Activated CD4-positive, alpha-beta T cell treated with anti-CD3 and anti-CD28 coated beads for 36 hours (primary cell): ENCODE measurements at regions of chr1 and their contacts with region 1.

Region 1: DNA sequence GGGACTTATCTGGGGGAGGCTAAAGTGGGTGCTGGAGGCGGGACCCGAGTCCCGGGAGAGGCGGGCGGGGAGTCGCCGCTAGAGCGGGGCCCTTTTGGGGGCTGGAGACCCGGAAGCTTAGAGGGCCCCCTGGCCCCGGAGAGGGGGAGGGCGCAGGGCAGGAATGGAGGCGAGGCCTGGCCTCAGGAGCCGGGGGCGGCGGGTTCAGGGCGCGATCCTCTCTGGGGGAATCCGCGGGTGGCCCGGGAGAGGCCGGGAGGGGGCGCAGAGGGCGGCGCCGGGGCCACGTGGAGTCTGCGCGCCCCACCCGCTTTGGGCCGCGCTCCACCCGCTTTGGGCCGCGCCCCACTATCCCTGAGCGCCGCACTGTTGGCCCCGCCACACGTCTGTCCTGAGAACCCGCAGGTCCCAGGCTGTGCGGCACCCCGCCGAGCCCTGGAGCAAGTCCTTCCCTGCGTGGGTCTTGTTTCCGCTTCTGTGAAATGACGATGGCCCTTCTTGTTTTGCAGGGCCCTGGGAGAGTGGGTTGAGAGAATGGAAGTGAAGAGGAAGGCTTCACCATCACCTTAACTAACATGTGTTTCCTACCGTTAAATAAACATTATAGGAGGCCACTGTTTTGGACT is 84.4 kb downstream of the NKAIN1 start:
- DNase-seq: peak; percentile 79
- ATAC-seq: peak; percentile 82
- H3K4me3 Mint-ChIP-seq: peak overlapping the region; percentile 88
- H3K27ac Mint-ChIP-seq: peak overlapping the region; percentile 87
- H3K4me1 Mint-ChIP-seq: peaks cover 8% of the 10 kb centered on the region
- H3K27me3 Mint-ChIP-seq: no peaks in the 10 kb centered on the region

Region 2: GRCh38 chr1:31010086-31010989 is 145.0 kb before region 1 on chr1:
- CTCF ChIA-PET with region 1: no interaction called
- POLR2A ChIA-PET with region 1: no interaction called
- intact Hi-C with region 1: loop called in 1 of 2 experiments (anchors 1 kb)
- DNase-seq: peak; percentile 60
- ATAC-seq: peak; percentile 98
- H3K4me3 Mint-ChIP-seq: no peak overlapping the region
- H3K27ac Mint-ChIP-seq: peak overlapping the region; percentile 88
- H3K4me1 Mint-ChIP-seq: peaks cover 68% of the 10 kb centered on the region
- H3K27me3 Mint-ChIP-seq: no peaks in the 10 kb centered on the region

Region 3: DNA sequence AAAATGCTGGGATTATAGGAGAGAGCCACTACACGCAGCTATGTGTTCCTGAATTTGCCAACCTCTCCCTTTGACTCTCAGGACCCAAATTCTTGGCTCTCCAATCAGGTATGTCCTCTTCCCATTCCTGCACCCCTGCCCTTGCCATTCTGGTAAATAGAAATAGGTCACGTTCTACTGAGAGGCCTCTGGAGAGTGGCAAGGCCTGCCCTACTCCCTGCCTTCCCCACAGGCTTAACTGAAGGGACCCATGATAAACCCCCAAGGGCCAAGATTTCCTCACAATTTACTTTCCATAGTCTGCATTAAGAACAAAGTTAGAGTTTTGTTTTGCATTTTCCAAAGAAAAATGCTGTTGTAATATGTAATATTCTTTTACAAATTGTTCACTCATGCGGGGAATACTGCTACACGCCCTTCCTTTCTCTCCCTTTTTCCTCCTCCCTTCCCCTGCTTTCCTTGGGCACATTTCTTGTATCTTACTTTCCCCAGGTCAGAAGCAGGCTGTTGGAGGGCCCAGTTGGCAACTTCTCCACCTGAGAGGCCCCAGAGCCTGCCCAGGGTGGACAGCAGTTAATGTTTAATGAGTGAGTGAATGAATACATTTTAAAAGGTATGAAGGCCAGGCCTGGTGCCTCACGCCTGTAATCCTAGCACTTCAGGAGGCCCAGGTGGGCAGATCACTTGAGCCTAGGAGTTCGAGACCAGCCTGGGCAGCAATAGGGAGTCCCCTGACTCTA is 55.9 kb before region 1 on chr1:
- CTCF ChIA-PET with region 1: no interaction called
- POLR2A ChIA-PET with region 1: no interaction called
- intact Hi-C with region 1: no loop called
- DNase-seq: no peak
- ATAC-seq: no peak
- H3K4me3 Mint-ChIP-seq: no peak overlapping the region
- H3K27ac Mint-ChIP-seq: no peak overlapping the region
- H3K4me1 Mint-ChIP-seq: no peaks in the 10 kb centered on the region
- H3K27me3 Mint-ChIP-seq: no peaks in the 10 kb centered on the region

Region 4: DNA sequence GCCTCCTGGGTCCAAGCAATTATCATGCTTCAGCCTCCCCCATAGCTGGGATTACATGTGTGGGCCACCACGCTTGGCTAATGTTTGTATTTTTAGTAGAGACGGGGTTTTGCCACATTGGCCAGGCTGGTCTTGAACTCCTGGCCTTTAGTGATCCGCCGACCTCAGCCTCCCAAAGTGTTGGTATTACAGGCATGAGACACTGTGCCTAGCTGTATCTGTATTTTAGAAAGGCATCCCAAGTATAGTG is 15.1 kb after region 1 on chr1:
- CTCF ChIA-PET with region 1: interaction called, 8 read pairs
- POLR2A ChIA-PET with region 1: no interaction called
- intact Hi-C with region 1: loop called in 1 of 2 experiments (anchors 1 kb)
- DNase-seq: no peak
- ATAC-seq: no peak
- H3K4me3 Mint-ChIP-seq: no peak overlapping the region
- H3K27ac Mint-ChIP-seq: peak overlapping the region; percentile 53
- H3K4me1 Mint-ChIP-seq: peaks cover 9% of the 10 kb centered on the region
- H3K27me3 Mint-ChIP-seq: no peaks in the 10 kb centered on the region

Region 5: GRCh38 chr1:31296486-31297276 is 141.4 kb after region 1 on chr1 and contains the starts of genes SNRNP40 and ZCCHC17:
- CTCF ChIA-PET with region 1: no interaction called
- POLR2A ChIA-PET with region 1: no interaction called
- intact Hi-C with region 1: loop called (anchors 1 to 5 kb)
- DNase-seq: peak; percentile 94
- ATAC-seq: peak; percentile 98
- H3K4me3 Mint-ChIP-seq: no peak within 1 kb of the TSS
- H3K27ac Mint-ChIP-seq: no peak within 1 kb of the TSS
- H3K4me1 Mint-ChIP-seq: peaks cover 34% of the 10 kb centered on the region
- H3K27me3 Mint-ChIP-seq: no peaks in the 10 kb centered on the region
- total RNA-seq, gene SNRNP40: 101 to 111 TPM
- total RNA-seq, gene ZCCHC17: 23.9 to 28.8 TPM

Region 6: GRCh38 chr1:31335007-31335406 is 179.7 kb after region 1 on chr1:
- CTCF ChIA-PET with region 1: no interaction called
- POLR2A ChIA-PET with region 1: no interaction called
- intact Hi-C with region 1: loop called in 1 of 2 experiments (anchors 5 kb)
- DNase-seq: peak; percentile 6
- ATAC-seq: no peak
- H3K4me3 Mint-ChIP-seq: no peak overlapping the region
- H3K27ac Mint-ChIP-seq: no peak overlapping the region
- H3K4me1 Mint-ChIP-seq: no peaks in the 10 kb centered on the region
- H3K27me3 Mint-ChIP-seq: no peaks in the 10 kb centered on the region

Region 7: GRCh38 chr1:31413405-31414125 is 258.2 kb after region 1 on chr1:
- CTCF ChIA-PET with region 1: no interaction called
- POLR2A ChIA-PET with region 1: no interaction called
- intact Hi-C with region 1: loop called in 1 of 2 experiments (anchors 2 kb)
- DNase-seq: peak; percentile 40
- ATAC-seq: peak; percentile 53
- H3K4me3 Mint-ChIP-seq: peak overlapping the region; percentile 73
- H3K27ac Mint-ChIP-seq: no peak overlapping the region
- H3K4me1 Mint-ChIP-seq: peaks cover 8% of the 10 kb centered on the region
- H3K27me3 Mint-ChIP-seq: peaks cover 55% of the 10 kb centered on the region

Region 8: DNA sequence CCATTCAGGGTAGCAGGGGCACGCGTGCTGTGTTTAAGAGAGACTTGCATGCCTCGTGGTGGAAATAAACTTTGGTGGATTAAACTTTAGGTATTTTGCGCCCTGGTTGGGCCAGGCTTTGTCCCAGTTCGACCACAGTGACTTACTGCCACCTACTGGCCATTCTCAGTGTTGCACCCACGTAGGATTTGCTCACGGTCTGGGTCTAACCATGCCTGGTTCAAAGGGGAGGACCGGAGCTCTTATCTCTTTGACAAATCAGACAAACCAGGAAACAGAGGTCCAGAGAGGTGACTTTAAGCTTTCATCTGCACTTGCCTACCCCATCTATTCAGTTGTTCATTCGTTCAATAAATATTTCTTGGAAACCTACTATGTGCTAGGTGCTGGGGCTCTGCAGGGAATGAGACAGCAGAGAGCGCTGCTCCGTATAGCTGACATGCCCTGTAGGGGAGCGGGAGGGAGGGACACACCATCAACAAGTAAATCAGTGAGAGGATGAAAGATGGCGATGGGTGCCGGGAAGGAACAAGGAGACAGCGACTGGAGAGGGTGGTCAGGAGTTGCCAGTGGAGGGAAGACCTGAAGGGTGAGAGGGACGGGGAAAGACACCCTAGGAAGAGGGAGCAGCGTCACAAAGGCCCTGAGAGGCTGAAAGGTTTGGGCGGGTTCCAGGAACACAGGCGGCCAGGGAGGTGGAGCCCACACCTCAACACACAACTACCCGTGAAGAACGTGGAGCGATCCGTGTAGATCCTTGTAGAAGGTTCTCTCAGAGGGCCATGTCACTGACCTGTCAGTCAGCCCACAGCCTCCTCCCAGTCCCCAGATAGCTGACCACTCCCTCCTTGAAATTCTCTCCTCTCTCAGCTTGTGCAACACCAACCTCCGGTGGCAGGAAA is 393.8 kb after region 1 on chr1:
- CTCF ChIA-PET with region 1: no interaction called
- POLR2A ChIA-PET with region 1: no interaction called
- intact Hi-C with region 1: loop called (anchors 5 kb)
- DNase-seq: peak; percentile 93
- ATAC-seq: peak; percentile 91
- H3K4me3 Mint-ChIP-seq: peak overlapping the region; percentile 49
- H3K27ac Mint-ChIP-seq: peak overlapping the region; percentile 71
- H3K4me1 Mint-ChIP-seq: peaks cover 9% of the 10 kb centered on the region
- H3K27me3 Mint-ChIP-seq: peaks cover 8% of the 10 kb centered on the region